Body of pancreas (tissue), 4 donors: ENCODE measurements at regions of chr1 and their contacts with region 1.

Region 1: GRCh38 chr1:25204797-25205480 is 27.4 kb downstream of the SYF2 start:
- DNase-seq: peak in 1 of 4 donors; percentile 18
- ATAC-seq: no peak
- H3K4me3 ChIP-seq: no peak overlapping the region
- H3K27ac ChIP-seq: no peak overlapping the region
- H3K4me1 ChIP-seq: no peaks in the 10 kb centered on the region
- H3K27me3 ChIP-seq: no peaks in the 10 kb centered on the region
- CTCF ChIP-seq: peak; percentile 61 to 78 (median 68)
- POLR2A ChIP-seq: no peak

Region 2: DNA sequence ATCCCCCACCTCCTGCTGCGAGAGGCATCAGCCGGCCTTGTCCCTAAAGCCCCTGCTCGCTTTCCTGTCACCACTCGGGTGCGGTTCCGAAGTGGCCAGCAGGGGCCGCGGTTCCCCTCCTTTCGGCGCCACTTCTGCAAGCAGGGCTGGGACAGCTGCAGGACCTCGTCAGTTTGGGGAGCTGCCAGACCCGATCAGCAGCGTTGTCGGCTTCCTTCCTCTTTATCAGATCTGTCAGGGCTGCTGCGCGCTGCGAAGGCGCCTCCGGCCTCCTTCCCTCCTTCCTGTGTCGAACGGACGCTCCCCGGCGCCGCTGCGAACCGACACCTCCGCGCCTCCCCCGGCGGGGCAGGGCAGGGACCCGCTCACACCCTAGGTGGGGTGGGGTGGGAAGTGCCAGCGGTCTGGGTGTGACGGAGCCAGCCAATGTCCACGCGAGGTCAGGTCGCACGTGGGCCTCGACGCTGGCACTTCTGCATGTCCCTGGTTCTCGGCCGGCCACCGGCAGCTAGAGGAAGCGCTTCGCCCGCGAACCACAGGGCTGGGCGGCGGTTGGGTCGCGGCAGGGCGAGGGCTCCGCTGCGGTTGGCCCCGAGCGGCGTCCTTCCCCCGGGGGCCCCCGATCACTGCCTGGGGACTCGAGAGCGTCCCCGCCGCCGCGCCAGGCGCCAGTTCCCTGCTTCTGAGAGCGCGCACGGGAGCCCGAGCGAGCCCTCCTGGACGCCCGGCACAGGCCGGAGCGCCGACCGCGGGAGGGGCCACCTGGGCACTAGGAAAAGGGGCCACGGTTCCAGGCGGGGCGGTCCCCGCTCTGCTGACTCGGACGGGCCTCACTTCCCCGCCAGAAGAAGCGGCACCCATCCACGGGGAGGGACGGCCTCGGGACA is 356.7 kb before region 1 on chr1:
- intact Hi-C with region 1: loop called (anchors 5 kb)
- DNase-seq: peak; percentile 88 to 94 (median 92)
- ATAC-seq: peak; percentile 94
- H3K4me3 ChIP-seq: peak overlapping the region in 1 of 2 donors; percentile 25
- H3K27ac ChIP-seq: peak overlapping the region in 3 of 4 donors; percentile 22 to 65 (median 62)
- H3K4me1 ChIP-seq: peaks cover 14% of the 10 kb centered on the region
- H3K27me3 ChIP-seq: no peaks in the 10 kb centered on the region
- CTCF ChIP-seq: peak; percentile 84 to 98 (median 92)
- POLR2A ChIP-seq: peak in 1 of 3 donors; percentile 36

Region 3: GRCh38 chr1:24930204-24931145 is 274.5 kb before region 1 on chr1 and contains the start of gene RUNX3:
- intact Hi-C with region 1: loop called (anchors 10 kb)
- DNase-seq: peak in 2 of 4 donors; percentile 39 to 54
- ATAC-seq: peak; percentile 21
- H3K4me3 ChIP-seq: no peak within 1 kb of the TSS
- H3K27ac ChIP-seq: peak within 1 kb of the TSS in 1 of 4 donors; percentile 62
- H3K4me1 ChIP-seq: peaks cover 45% of the 10 kb centered on the region
- H3K27me3 ChIP-seq: peaks cover 0 to 56% of the 10 kb centered on the region in 2 donors
- CTCF ChIP-seq: no peak
- POLR2A ChIP-seq: peak in 1 of 3 donors; percentile 14
- total RNA-seq, gene RUNX3: 0.26 TPM in 1 of 2 donors, not detected in the other

Region 4: DNA sequence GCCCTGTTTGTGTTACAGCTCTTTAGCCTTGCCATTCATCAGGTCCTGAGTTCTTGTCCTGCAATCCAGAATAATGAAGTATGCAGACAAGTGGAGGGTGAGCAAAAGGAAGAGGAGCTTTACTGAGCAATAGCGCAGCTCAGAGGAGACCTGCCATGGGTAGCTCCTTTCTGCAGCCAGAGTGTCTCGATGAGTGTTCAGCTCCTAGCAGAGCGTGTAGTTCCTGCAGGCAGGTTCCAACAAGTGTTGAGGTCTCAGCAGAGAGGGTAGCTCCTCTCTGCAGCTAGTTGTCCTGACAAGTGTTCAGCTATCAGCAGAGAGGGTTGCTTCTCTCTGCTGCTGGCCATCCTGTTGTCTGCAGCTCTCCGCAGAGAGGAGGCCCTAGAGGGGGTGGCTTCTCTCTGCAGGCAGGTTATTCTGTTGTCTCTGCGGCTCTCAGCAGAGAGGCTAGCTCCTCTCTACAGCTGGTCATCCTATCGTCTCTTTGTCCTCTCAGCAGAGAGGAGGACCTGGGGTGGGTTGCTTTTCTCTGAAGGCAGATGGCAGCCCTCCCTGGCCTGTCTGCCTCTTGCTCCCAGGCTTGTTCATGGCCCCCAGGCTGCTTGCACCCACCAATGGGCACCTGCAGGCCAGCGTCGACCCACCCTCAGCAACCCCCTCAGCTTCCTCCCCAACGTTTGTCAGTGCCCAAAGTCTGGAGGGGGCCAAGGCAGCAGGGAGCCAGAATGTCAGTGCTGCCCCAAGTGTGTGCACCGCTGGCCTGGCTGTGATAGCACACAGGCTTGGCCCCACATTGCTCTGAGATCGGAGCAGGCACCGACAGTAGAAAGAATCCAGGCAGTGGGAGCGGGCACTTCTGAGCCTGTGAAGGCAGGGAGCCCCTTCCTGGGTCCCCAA is 162.4 kb before region 1 on chr1:
- intact Hi-C with region 1: no loop called
- DNase-seq: no peak
- ATAC-seq: no peak
- H3K4me3 ChIP-seq: no peak overlapping the region
- H3K27ac ChIP-seq: no peak overlapping the region
- H3K4me1 ChIP-seq: peaks cover 10% of the 10 kb centered on the region
- H3K27me3 ChIP-seq: no peaks in the 10 kb centered on the region
- CTCF ChIP-seq: no peak
- POLR2A ChIP-seq: no peak